Heart right ventricle (tissue), 16 donors: ENCODE measurements at regions of chr6 and their contacts with region 1.

Region 1: DNA sequence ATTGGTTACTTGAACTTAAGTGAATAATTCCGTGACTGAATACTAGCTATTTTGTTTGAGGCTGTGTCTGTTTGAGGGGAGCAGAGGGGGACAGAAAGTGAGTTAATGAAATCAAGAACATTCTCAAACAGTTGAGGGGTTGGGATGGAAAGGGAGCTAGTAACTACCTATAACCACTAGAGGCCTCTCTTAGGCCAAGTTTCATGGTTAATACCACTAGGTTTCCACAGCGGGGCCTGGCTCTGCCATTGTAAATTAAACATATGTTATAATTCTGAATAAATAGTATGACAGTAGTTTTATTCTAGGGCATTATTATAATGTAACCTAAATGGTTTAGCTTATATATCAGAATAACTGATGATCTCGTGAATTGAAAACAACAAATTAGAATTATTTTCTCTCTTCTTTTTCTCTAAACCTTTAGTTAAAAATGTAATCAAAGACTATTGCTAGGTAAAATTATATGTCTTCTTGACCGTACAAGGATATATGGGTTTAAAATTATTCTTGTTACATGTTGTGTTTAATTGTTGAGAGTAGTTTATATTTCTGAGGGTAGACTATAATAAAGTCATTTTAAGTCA is 108.1 kb downstream of the BCKDHB start:
- DNase-seq: peak in 1 of 2 donors; percentile 37
- ATAC-seq: peak; percentile 69 to 85 (median 77)
- H3K4me3 ChIP-seq: no peak overlapping the region
- H3K27ac ChIP-seq: peak overlapping the region in 1 of 10 donors; percentile 22
- H3K4me1 ChIP-seq: peaks cover 0 to 19% (median 11%) of the 10 kb centered on the region in 9 donors
- H3K27me3 ChIP-seq: no peaks in the 10 kb centered on the region
- CTCF ChIP-seq: peak; percentile 43 to 85 (median 72)

Region 2: GRCh38 chr6:80060774-80061173 is 153.8 kb before region 1 on chr6:
- intact Hi-C with region 1: no loop called
- DNase-seq: no peak
- ATAC-seq: no peak
- H3K4me3 ChIP-seq: no peak overlapping the region
- H3K27ac ChIP-seq: no peak overlapping the region
- H3K4me1 ChIP-seq: no peaks in the 10 kb centered on the region
- H3K27me3 ChIP-seq: no peaks in the 10 kb centered on the region
- CTCF ChIP-seq: no peak

Region 3: GRCh38 chr6:80143419-80143937 is 71.1 kb before region 1 on chr6:
- intact Hi-C with region 1: loop called in 1 of 10 experiments (anchors 5 kb)
- DNase-seq: peak; percentile 17 to 62
- ATAC-seq: peak; percentile 23 to 90 (median 73)
- H3K4me3 ChIP-seq: no peak overlapping the region
- H3K27ac ChIP-seq: peak overlapping the region in 4 of 10 donors; percentile 6 to 58 (median 13)
- H3K4me1 ChIP-seq: peaks cover 0 to 37% (median 33%) of the 10 kb centered on the region in 9 donors
- H3K27me3 ChIP-seq: no peaks in the 10 kb centered on the region
- CTCF ChIP-seq: peak in 1 of 9 donors; percentile 17

Region 4: GRCh38 chr6:80304014-80304413 is 89.5 kb after region 1 on chr6:
- intact Hi-C with region 1: no loop called
- DNase-seq: no peak
- ATAC-seq: no peak
- H3K4me3 ChIP-seq: no peak overlapping the region
- H3K27ac ChIP-seq: no peak overlapping the region
- H3K4me1 ChIP-seq: no peaks in the 10 kb centered on the region
- H3K27me3 ChIP-seq: no peaks in the 10 kb centered on the region
- CTCF ChIP-seq: no peak

Region 5: DNA sequence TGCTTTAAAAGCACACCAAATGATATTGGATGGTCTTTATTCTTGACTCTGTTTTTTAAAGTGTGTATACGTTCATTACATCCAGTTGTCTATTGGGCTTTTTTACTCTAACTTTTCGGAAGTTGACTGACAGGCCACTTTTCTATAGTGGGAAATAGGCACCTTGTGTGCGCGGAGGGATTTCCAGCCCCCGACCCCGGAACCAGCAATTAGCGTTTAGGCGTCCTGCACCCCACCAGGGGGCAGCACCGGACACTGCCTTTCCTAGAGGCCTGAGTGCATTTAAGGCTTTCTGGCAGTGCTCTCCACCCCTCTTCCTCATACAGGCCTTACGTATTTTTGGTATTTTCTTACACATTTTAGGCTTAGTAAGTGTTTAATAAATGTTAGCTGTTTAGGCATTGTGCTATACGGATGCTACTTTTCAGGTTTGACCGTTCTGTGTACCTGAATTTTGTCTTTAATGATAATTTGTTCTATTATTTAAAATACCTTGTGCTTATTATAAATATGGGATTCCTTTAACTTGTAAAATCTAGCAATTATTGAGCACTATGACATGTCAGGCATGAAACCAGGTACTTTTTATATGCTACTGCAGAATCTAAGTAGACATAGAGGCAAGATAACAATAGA is 123.8 kb after region 1 on chr6:
- intact Hi-C with region 1: loop called in 3 of 10 experiments (anchors 10 kb)
- DNase-seq: peak; percentile 45 to 72
- ATAC-seq: peak in 6 of 8 donors; percentile 46 to 72 (median 66)
- H3K4me3 ChIP-seq: no peak overlapping the region
- H3K27ac ChIP-seq: no peak overlapping the region
- H3K4me1 ChIP-seq: peaks cover 0 to 6% (median 0%) of the 10 kb centered on the region in 9 donors
- H3K27me3 ChIP-seq: no peaks in the 10 kb centered on the region
- CTCF ChIP-seq: peak; percentile 41 to 83 (median 74)

Region 6: GRCh38 chr6:80477591-80477990 is 263.1 kb after region 1 on chr6:
- intact Hi-C with region 1: loop called in 1 of 10 experiments (anchors 5 kb)
- DNase-seq: no peak
- ATAC-seq: no peak
- H3K4me3 ChIP-seq: no peak overlapping the region
- H3K27ac ChIP-seq: no peak overlapping the region
- H3K4me1 ChIP-seq: no peaks in the 10 kb centered on the region
- H3K27me3 ChIP-seq: no peaks in the 10 kb centered on the region
- CTCF ChIP-seq: no peak

Region 7: GRCh38 chr6:80605165-80605989 is 390.8 kb after region 1 on chr6:
- intact Hi-C with region 1: loop called in 2 of 10 experiments (anchors 10 kb)
- DNase-seq: peak in 1 of 2 donors; percentile 10
- ATAC-seq: peak in 2 of 8 donors; percentile 52 to 70
- H3K4me3 ChIP-seq: no peak overlapping the region
- H3K27ac ChIP-seq: no peak overlapping the region
- H3K4me1 ChIP-seq: peaks cover 0 to 21% (median 4%) of the 10 kb centered on the region in 9 donors
- H3K27me3 ChIP-seq: no peaks in the 10 kb centered on the region
- CTCF ChIP-seq: peak in 7 of 9 donors; percentile 54 to 69 (median 63)

Region 8: DNA sequence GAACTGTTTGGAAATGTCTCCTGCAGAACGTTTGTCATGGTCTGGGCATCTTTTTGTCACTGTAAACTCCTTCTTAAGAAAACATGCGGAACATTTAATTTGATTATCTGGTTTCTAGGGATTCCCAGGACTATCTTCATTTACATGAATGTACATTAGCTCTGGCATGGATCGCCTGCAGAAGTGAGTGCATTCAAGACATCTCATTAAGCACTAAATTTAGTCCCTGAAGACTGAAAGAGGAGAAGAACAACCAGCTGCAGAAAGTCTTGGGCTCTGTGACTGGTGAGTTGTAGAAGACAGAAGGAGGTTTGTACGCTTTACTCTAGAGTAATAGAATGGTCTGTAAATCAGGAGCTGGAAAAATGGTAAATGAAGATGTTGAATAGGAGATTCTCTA is 432.6 kb after region 1 on chr6:
- intact Hi-C with region 1: no loop called
- DNase-seq: no peak
- ATAC-seq: no peak
- H3K4me3 ChIP-seq: no peak overlapping the region
- H3K27ac ChIP-seq: no peak overlapping the region
- H3K4me1 ChIP-seq: no peaks in the 10 kb centered on the region
- H3K27me3 ChIP-seq: no peaks in the 10 kb centered on the region
- CTCF ChIP-seq: no peak